Activated T-helper 1 cell treated with anti-CD3 and anti-CD28 coated beads, Interleukin-12 subunit alpha, Interleukin-12 subunit beta, Interleukin-2, Interleukin-4 antibody, amounts not matched to agents 30 ng/mL and 10 ng/mL and 1 ng/mL, durations not matched to agents 14 hours and 24 hours and 36 hours (primary cell): ENCODE measurements at regions of chr15 and their contacts with region 1.

Region 1: DNA sequence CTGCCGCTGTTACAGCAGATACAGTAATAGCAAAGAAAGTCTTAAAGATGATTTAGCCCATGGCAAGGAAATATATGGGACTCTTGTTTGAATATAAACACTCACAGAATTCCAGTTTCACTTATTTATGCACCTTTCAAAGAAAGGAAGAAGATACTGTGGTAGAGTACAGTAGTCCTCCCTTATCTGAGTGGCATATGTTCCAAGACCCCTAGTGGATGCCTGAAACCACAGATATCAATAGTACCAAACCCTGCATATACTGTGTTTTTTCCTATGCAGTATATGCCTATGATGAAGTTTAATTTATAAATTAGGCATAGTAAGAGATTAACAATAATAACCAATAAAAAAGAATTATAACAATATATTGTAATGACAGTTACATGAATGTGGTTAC is 8.2 kb downstream of the MAP2K1 start:
- DNase-seq: no peak
- H3K4me3 Mint-ChIP-seq: no peak overlapping the region
- H3K27ac Mint-ChIP-seq: no peak overlapping the region
- H3K4me1 Mint-ChIP-seq: peaks cover 59% of the 10 kb centered on the region
- H3K27me3 Mint-ChIP-seq: no peaks in the 10 kb centered on the region

Region 2: GRCh38 chr15:66269326-66270038 is 125.4 kb before region 1 on chr15:
- intact Hi-C with region 1: no loop called
- DNase-seq: no peak
- H3K4me3 Mint-ChIP-seq: no peak overlapping the region
- H3K27ac Mint-ChIP-seq: no peak overlapping the region
- H3K4me1 Mint-ChIP-seq: no peaks in the 10 kb centered on the region
- H3K27me3 Mint-ChIP-seq: peaks cover 16% of the 10 kb centered on the region

Region 3: GRCh38 chr15:66328721-66329220 is 66.1 kb before region 1 on chr15:
- intact Hi-C with region 1: no loop called
- DNase-seq: no peak
- H3K4me3 Mint-ChIP-seq: no peak overlapping the region
- H3K27ac Mint-ChIP-seq: no peak overlapping the region
- H3K4me1 Mint-ChIP-seq: no peaks in the 10 kb centered on the region
- H3K27me3 Mint-ChIP-seq: no peaks in the 10 kb centered on the region

Region 4: GRCh38 chr15:66422347-66422746 is 27.4 kb after region 1 on chr15:
- intact Hi-C with region 1: loop called (anchors 1 kb)
- DNase-seq: no peak
- H3K4me3 Mint-ChIP-seq: no peak overlapping the region
- H3K27ac Mint-ChIP-seq: peak overlapping the region; percentile 22
- H3K4me1 Mint-ChIP-seq: peaks cover 59% of the 10 kb centered on the region
- H3K27me3 Mint-ChIP-seq: no peaks in the 10 kb centered on the region

Region 5: GRCh38 chr15:67267951-67268941 is 873.3 kb after region 1 on chr15:
- intact Hi-C with region 1: no loop called
- DNase-seq: no peak
- H3K4me3 Mint-ChIP-seq: no peak overlapping the region
- H3K27ac Mint-ChIP-seq: no peak overlapping the region
- H3K4me1 Mint-ChIP-seq: peaks cover 10% of the 10 kb centered on the region
- H3K27me3 Mint-ChIP-seq: peaks cover 9% of the 10 kb centered on the region